Posterior vena cava (tissue), 2 donors: ENCODE measurements at regions of chr7 and their contacts with region 1.

Region 1: DNA sequence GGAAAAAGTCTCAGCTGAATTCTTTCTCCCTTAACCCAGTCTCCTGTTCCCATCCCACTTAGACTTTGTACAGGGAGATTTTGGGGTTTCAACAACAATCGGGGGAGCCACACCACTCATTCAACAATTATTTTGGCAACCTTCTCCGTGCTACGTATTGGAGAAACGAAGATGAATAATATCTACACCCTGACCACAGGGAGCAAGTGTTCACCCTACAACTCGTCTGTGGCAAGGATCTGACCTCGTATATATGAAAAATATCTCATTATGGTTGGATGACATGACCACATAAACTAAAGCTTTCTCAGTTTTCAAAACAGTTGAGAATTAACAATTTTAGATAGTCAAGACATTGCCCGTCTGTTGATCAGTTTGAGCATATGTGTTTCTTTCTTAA is 302.1 kb downstream of the CACNA2D1 start:
- DNase-seq: no peak

Region 2: GRCh38 chr7:81515009-81515408 is 626.4 kb before region 1 on chr7:
- intact Hi-C with region 1: no loop called
- DNase-seq: no peak

Region 3: GRCh38 chr7:82131215-82131614 is 10.2 kb before region 1 on chr7:
- intact Hi-C with region 1: loop called in 1 of 2 experiments (anchors 1 kb)
- DNase-seq: no peak

Region 4: GRCh38 chr7:82164813-82165212 is 23.4 kb after region 1 on chr7:
- intact Hi-C with region 1: no loop called
- DNase-seq: no peak

Region 5: GRCh38 chr7:82194016-82194643 is 52.7 kb after region 1 on chr7:
- intact Hi-C with region 1: no loop called
- DNase-seq: no peak